Esophagus squamous epithelium (tissue), 5 donors: ENCODE measurements at regions of chr6 and their contacts with region 1.

Region 1: DNA sequence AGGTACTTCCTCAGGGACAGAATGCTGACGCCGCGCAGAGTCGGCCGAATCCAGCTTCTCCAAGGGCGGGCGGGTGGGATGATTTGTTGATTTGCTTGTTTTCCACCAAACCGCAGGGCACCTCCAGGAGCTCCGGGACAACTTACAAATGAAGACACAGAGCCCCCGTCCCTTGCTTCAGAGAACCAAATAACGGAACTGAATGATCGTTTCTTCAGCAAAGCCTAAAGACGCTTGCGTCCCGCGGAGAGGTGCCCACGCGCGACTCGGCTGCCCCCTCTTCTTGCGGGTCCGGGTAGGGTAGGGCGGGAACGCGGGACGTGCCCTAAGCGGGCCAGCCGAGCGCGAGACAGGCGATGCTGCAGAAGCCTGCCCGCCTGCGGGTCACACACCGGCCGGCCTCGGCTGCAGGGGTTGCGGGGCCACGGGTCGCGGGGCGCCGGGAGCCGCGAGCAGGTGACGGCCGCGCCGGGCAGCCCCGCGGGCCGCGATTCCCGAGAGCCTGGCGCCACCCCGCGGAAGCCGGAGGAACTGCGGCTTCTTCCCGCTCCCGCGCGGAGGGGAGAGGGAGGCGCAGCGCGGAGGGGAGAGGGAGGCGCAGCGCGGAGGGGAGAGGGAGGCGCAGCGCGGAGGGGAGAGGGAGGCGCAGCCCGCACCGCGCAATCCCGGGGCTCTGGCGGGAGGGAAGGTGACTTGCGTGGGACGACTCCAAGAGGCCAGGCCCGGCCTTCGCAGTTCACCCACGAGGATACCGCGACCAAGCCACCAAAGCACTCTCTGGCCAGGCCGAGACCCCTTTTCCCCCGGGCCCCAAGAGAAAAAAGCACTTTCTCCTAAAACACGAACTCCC is 7.7 kb upstream of the FOXF2 start:
- DNase-seq: no peak
- H3K4me3 ChIP-seq: peak overlapping the region; percentile 19 to 68 (median 38)
- H3K27ac ChIP-seq: peak overlapping the region; percentile 78 to 93 (median 86)
- H3K4me1 ChIP-seq: peaks cover 25 to 82% (median 36%) of the 10 kb centered on the region in 3 donors
- H3K27me3 ChIP-seq: peaks cover 33 to 100% (median 43%) of the 10 kb centered on the region in 4 donors
- CTCF ChIP-seq: peak; percentile 46 to 95 (median 86)
- POLR2A ChIP-seq: peak in 1 of 4 donors; percentile 27

Region 2: DNA sequence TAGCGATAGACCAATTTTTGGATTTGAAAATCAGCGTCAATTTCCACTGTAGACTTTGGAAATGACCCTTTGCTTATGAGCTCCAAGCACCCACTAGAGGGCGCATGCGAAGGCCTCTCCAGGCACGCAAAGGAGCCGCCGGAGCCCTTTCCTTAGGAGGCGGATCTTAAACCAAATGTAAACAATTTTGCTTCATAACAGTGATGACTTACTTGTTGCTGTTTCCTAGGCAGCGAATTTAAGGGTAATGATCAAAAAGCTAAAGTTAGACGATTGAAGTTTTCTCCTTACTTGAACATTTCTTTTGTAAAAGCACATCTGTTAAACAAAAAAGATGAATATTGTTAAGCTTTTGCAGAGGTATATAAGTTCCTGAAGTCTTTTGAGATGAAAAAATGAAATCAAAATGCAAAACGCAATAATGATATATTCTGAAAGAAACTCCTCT is 659.6 kb before region 1 on chr6:
- intact Hi-C with region 1: loop called (anchors 10 kb)
- DNase-seq: no peak
- H3K4me3 ChIP-seq: no peak overlapping the region
- H3K27ac ChIP-seq: no peak overlapping the region
- H3K4me1 ChIP-seq: peaks cover 0 to 4% (median 0%) of the 10 kb centered on the region in 3 donors
- H3K27me3 ChIP-seq: peaks cover 0 to 7% (median 0%) of the 10 kb centered on the region in 4 donors
- CTCF ChIP-seq: peak; percentile 78 to 88 (median 82)
- POLR2A ChIP-seq: no peak

Region 3: GRCh38 chr6:1335367-1336037 is 46.2 kb before region 1 on chr6:
- intact Hi-C with region 1: no loop called
- DNase-seq: no peak
- H3K4me3 ChIP-seq: no peak overlapping the region
- H3K27ac ChIP-seq: peak overlapping the region; percentile 14 to 81 (median 44)
- H3K4me1 ChIP-seq: peaks cover 4 to 23% (median 11%) of the 10 kb centered on the region in 3 donors
- H3K27me3 ChIP-seq: peaks cover 0 to 6% (median 0%) of the 10 kb centered on the region in 4 donors
- CTCF ChIP-seq: peak in 2 of 6 experiments; percentile 9 to 17
- POLR2A ChIP-seq: no peak

Region 4: DNA sequence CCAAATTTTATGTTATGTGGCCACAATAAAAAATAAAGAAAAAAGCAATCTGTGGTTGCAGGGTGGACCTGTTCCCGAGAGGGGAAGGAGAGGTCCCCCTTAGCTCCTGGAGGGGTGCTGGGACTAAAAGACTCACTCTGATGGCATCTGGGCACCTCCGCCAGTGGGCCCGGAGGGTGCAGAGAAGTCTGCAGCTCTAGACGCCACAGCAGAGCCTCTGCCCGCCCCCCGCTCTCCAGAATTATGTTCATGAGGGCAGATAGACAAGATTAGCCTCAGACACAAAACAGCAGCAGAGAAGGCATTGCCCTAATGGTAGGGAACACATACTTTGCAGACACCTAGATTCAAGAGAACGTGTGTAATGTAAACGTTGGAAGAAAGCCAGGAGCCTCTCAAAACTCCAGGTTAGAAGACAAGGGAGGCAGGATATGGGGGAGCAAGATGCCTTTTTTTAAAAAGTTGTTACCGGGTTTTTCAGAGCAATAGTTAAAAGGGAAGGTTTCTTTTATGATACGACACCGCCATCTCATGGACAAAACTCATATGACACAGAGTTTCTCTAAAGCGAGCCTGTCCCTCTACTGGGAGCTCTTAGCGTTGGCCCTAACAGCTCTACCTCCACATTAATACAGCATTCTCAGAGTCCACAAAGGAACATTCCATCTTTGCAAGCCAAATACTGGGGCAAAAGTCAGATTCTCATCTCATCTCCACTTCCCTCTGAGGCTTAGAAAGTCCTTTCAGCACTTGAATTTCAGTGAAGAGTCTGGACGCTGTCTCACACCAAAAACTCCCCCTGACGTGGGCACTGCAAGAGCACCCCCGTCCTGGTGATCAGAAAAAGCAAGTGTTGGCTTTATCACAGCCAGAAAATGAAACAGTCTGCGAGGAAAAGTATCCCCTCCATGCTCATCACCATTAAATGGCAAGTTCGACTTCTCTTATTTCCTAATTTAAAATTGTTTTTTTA is 54.9 kb after region 1 on chr6:
- intact Hi-C with region 1: no loop called
- DNase-seq: no peak
- H3K4me3 ChIP-seq: no peak overlapping the region
- H3K27ac ChIP-seq: no peak overlapping the region
- H3K4me1 ChIP-seq: no peaks in the 10 kb centered on the region
- H3K27me3 ChIP-seq: peaks cover 0 to 42% (median 0%) of the 10 kb centered on the region in 4 donors
- CTCF ChIP-seq: peak; percentile 62 to 86 (median 74)
- POLR2A ChIP-seq: no peak